Activated T-helper 1 cell treated with anti-CD3 and anti-CD28 coated beads, Interleukin-12 subunit alpha, Interleukin-12 subunit beta, Interleukin-2, Interleukin-4 antibody, amounts not matched to agents 30 ng/mL and 10 ng/mL and 1 ng/mL, durations not matched to agents 14 hours and 24 hours and 36 hours (primary cell): ENCODE measurements at regions of chr3 and their contacts with region 1.

Region 1: GRCh38 chr3:4633078-4634004 is 140.2 kb downstream of the ITPR1 start:
- DNase-seq: no peak
- H3K4me3 Mint-ChIP-seq: no peak overlapping the region
- H3K27ac Mint-ChIP-seq: peak overlapping the region; percentile 6
- H3K4me1 Mint-ChIP-seq: peaks cover 8% of the 10 kb centered on the region
- H3K27me3 Mint-ChIP-seq: no peaks in the 10 kb centered on the region

Region 2: GRCh38 chr3:4524088-4525023 is 109.0 kb before region 1 on chr3:
- intact Hi-C with region 1: loop called (anchors 1 kb)
- DNase-seq: no peak
- H3K4me3 Mint-ChIP-seq: no peak overlapping the region
- H3K27ac Mint-ChIP-seq: no peak overlapping the region
- H3K4me1 Mint-ChIP-seq: peaks cover 25% of the 10 kb centered on the region
- H3K27me3 Mint-ChIP-seq: no peaks in the 10 kb centered on the region